ENCODE measurements at regions of chr4 and their contacts with region 1.

Region 1: DNA sequence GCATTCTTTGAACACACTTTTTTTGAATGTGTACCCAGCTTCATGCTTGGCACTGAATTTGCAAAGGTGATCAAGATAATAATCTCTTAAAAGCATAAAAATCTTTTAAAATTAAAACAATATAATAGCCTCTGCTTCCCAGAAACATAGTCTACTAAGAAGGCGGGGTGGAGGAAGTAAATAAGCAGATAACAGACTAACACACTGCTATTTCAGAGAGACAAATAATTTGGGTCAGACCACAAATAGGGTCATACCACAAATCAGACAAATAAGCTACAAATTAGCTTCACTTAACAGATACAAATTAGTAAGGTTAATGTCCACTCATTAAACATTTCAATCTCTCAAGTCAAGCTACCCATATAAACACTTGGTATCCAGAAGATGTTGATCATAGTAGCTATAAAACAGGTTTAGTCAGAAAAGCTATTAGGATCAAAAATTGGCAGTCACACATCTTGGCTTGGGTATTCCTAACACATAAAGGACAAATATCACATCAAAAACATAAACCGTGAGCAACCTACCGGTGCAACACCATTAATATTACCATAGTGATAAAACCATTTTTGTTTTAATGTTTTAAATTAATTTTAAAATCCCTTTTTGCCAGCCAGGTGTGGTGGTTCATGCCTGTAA is 47.3 kb downstream of the PPP3CA start:
- DNase-seq: no peak
- ATAC-seq: no peak
- H3K4me3 ChIP-seq: no peak overlapping the region
- H3K27ac ChIP-seq: no peak overlapping the region
- H3K4me1 ChIP-seq: peaks cover 0 to 17% (median 4%) of the 10 kb centered on the region in 9 donors
- H3K27me3 ChIP-seq: no peaks in the 10 kb centered on the region
- CTCF ChIP-seq: no peak

Region 2: GRCh38 chr4:100690812-100691211 is 609.2 kb before region 1 on chr4:
- intact Hi-C with region 1: no loop called
- DNase-seq: no peak
- ATAC-seq: no peak
- H3K4me3 ChIP-seq: no peak overlapping the region
- H3K27ac ChIP-seq: no peak overlapping the region
- H3K4me1 ChIP-seq: peaks cover 0 to under 1% (median 0%) of the 10 kb centered on the region in 9 donors
- H3K27me3 ChIP-seq: no peaks in the 10 kb centered on the region
- CTCF ChIP-seq: no peak

Region 3: GRCh38 chr4:101227715-101228114 is 72.3 kb before region 1 on chr4:
- intact Hi-C with region 1: loop called in 1 of 10 experiments (anchors 2 kb)
- DNase-seq: no peak
- ATAC-seq: no peak
- H3K4me3 ChIP-seq: no peak overlapping the region
- H3K27ac ChIP-seq: no peak overlapping the region
- H3K4me1 ChIP-seq: peaks cover 0 to 31% (median 17%) of the 10 kb centered on the region in 9 donors
- H3K27me3 ChIP-seq: no peaks in the 10 kb centered on the region
- CTCF ChIP-seq: no peak

Measured in heart right ventricle (tissue), 16 donors.